PC-9 (cell line): ENCODE measurements at regions of chr16 and their contacts with region 1.

Region 1: GRCh38 chr16:50354629-50355456 is 13.9 kb downstream of the BRD7 start:
- DNase-seq: no peak
- H3K4me3 ChIP-seq: no peak overlapping the region
- H3K27ac ChIP-seq: no peak overlapping the region
- H3K4me1 ChIP-seq: no peaks in the 10 kb centered on the region
- H3K27me3 ChIP-seq: no peaks in the 10 kb centered on the region
- CTCF ChIP-seq: peak; percentile 83

Region 2: GRCh38 chr16:50281964-50282538 is 72.8 kb before region 1 on chr16:
- CTCF ChIA-PET with region 1: interaction called, 17 read pairs
- POLR2A ChIA-PET with region 1: no interaction called
- intact Hi-C with region 1: no loop called
- DNase-seq: no peak
- H3K4me3 ChIP-seq: no peak overlapping the region
- H3K27ac ChIP-seq: no peak overlapping the region
- H3K4me1 ChIP-seq: no peaks in the 10 kb centered on the region
- H3K27me3 ChIP-seq: no peaks in the 10 kb centered on the region
- CTCF ChIP-seq: no peak

Region 3: DNA sequence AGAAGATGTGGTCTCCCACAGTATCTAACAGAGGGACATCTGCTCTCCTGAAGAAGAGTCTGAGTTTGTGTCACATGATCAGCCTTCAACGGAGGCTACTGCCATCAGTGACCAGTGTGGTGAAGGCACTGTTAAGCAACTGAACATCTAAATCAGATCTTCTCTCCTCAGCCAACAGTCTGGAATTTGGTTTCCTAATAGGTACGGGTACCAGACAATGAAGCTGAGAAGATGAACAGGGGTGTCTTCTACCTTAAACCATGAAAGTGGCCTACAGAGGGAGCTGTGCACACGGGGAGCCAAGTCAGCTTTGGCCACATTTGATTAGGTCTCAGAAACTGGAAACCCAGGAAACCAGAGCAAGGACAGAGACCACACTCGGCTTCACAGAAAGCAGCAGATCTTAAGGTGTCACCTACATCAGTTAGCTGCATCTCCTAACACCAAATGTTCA is 27.9 kb before region 1 on chr16:
- CTCF ChIA-PET with region 1: no interaction called
- POLR2A ChIA-PET with region 1: no interaction called
- intact Hi-C with region 1: no loop called
- DNase-seq: no peak
- H3K4me3 ChIP-seq: no peak overlapping the region
- H3K27ac ChIP-seq: no peak overlapping the region
- H3K4me1 ChIP-seq: no peaks in the 10 kb centered on the region
- H3K27me3 ChIP-seq: no peaks in the 10 kb centered on the region
- CTCF ChIP-seq: peak; percentile 57

Region 4: GRCh38 chr16:50338371-50339231 is 16.2 kb before region 1 on chr16:
- CTCF ChIA-PET with region 1: interaction called, 14 read pairs
- POLR2A ChIA-PET with region 1: no interaction called
- intact Hi-C with region 1: no loop called
- DNase-seq: no peak
- H3K4me3 ChIP-seq: no peak overlapping the region
- H3K27ac ChIP-seq: no peak overlapping the region
- H3K4me1 ChIP-seq: no peaks in the 10 kb centered on the region
- H3K27me3 ChIP-seq: no peaks in the 10 kb centered on the region
- CTCF ChIP-seq: no peak